Esophagus squamous epithelium (tissue), 5 donors: ENCODE measurements at regions of chr3 and their contacts with region 1.

Region 1: DNA sequence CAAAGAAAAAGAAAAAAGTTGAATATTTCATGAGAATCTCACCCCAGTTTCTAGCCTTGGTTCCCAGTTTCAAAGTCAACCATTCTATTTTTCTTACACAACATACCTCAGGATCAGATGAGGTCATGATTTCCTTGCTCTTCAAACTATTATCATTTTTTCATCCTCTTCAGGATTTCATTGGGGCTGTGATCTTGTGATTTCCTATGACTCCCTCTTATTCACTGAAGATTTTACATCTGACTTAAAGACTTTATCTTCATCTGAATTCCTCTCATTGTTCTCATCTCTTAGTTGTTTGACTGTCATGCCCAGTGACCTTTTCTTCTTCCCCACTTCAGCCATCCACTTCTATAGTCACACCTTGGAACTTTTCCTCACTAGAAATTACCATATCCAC is 3.1 kb upstream of the C3orf33 start:
- DNase-seq: no peak
- H3K4me3 ChIP-seq: no peak overlapping the region
- H3K27ac ChIP-seq: no peak overlapping the region
- H3K4me1 ChIP-seq: peaks cover 0 to 16% (median 3%) of the 10 kb centered on the region in 3 donors
- H3K27me3 ChIP-seq: no peaks in the 10 kb centered on the region
- CTCF ChIP-seq: no peak
- POLR2A ChIP-seq: no peak

Region 2: GRCh38 chr3:155753036-155753639 is 56.0 kb before region 1 on chr3:
- intact Hi-C with region 1: loop called (anchors 2 kb)
- DNase-seq: no peak
- H3K4me3 ChIP-seq: no peak overlapping the region
- H3K27ac ChIP-seq: no peak overlapping the region
- H3K4me1 ChIP-seq: no peaks in the 10 kb centered on the region
- H3K27me3 ChIP-seq: peaks cover 0 to 4% (median 0%) of the 10 kb centered on the region in 4 donors
- CTCF ChIP-seq: peak in 3 of 6 experiments; percentile 8 to 40 (median 10)
- POLR2A ChIP-seq: no peak

Region 3: GRCh38 chr3:155946178-155946577 is 137.0 kb after region 1 on chr3:
- intact Hi-C with region 1: no loop called
- DNase-seq: no peak
- H3K4me3 ChIP-seq: no peak overlapping the region
- H3K27ac ChIP-seq: no peak overlapping the region
- H3K4me1 ChIP-seq: no peaks in the 10 kb centered on the region
- H3K27me3 ChIP-seq: no peaks in the 10 kb centered on the region
- CTCF ChIP-seq: no peak
- POLR2A ChIP-seq: no peak